Activated B cell treated with CpG ODN at 0.5 μM for 24 hours (primary cell): ENCODE measurements at regions of chr6 and their contacts with region 1.

Region 1: GRCh38 chr6:150692604-150693003 is 92.9 kb downstream of the PLEKHG1 start:
- DNase-seq: no peak
- ATAC-seq: no peak
- H3K4me3 Mint-ChIP-seq: no peak overlapping the region
- H3K27ac Mint-ChIP-seq: peak overlapping the region; percentile 71
- H3K4me1 Mint-ChIP-seq: peaks cover 94% of the 10 kb centered on the region
- H3K27me3 Mint-ChIP-seq: no peaks in the 10 kb centered on the region
- CTCF ChIP-seq: no peak

Region 2: GRCh38 chr6:150417899-150418826 is 274.4 kb before region 1 on chr6:
- CTCF ChIA-PET with region 1: interaction called, 5 read pairs
- POLR2A ChIA-PET with region 1: interaction called, 3 read pairs
- intact Hi-C with region 1: loop called (anchors 2 kb)
- DNase-seq: no peak
- ATAC-seq: peak; percentile 90
- H3K4me3 Mint-ChIP-seq: peak overlapping the region; percentile 82
- H3K27ac Mint-ChIP-seq: peak overlapping the region; percentile 77
- H3K4me1 Mint-ChIP-seq: peaks cover 14% of the 10 kb centered on the region
- H3K27me3 Mint-ChIP-seq: peaks cover 16% of the 10 kb centered on the region
- CTCF ChIP-seq: peak; percentile 58

Region 3: GRCh38 chr6:150547502-150548222 is 144.9 kb before region 1 on chr6:
- CTCF ChIA-PET with region 1: no interaction called
- POLR2A ChIA-PET with region 1: no interaction called
- intact Hi-C with region 1: no loop called
- DNase-seq: no peak
- ATAC-seq: no peak
- H3K4me3 Mint-ChIP-seq: no peak overlapping the region
- H3K27ac Mint-ChIP-seq: no peak overlapping the region
- H3K4me1 Mint-ChIP-seq: no peaks in the 10 kb centered on the region
- H3K27me3 Mint-ChIP-seq: peaks cover 16% of the 10 kb centered on the region
- CTCF ChIP-seq: no peak

Region 4: GRCh38 chr6:150641398-150642139 is 51.0 kb before region 1 on chr6:
- CTCF ChIA-PET with region 1: no interaction called
- POLR2A ChIA-PET with region 1: interaction called, 7 read pairs
- intact Hi-C with region 1: loop called (anchors 2 kb)
- DNase-seq: no peak
- ATAC-seq: peak; percentile 49
- H3K4me3 Mint-ChIP-seq: peak overlapping the region; percentile 77
- H3K27ac Mint-ChIP-seq: peak overlapping the region; percentile 91
- H3K4me1 Mint-ChIP-seq: peaks cover 90% of the 10 kb centered on the region
- H3K27me3 Mint-ChIP-seq: no peaks in the 10 kb centered on the region
- CTCF ChIP-seq: no peak

Region 5: DNA sequence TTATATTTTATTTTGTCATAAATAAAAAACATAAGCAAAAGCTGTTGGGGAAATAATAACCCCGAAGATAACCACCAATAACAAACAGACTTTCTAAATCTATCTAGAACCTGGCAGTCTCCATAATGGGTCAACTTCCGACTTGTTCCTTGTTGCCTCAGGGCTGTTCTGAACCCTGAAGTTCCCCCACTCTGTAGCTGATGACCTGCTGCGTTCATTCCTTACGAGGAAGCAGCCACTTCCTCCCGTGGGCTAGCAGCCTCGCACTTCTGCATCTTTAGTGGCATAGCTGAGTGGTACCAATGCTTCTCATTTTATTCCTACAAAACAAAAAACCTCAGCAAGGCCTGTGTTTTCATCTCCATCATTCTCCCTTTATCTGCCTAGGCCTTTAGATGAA is 10.1 kb after region 1 on chr6:
- CTCF ChIA-PET with region 1: interaction called, 3 read pairs
- POLR2A ChIA-PET with region 1: interaction called, 8 read pairs
- intact Hi-C with region 1: loop called (anchors 1 kb)
- DNase-seq: no peak
- ATAC-seq: peak; percentile 74
- H3K4me3 Mint-ChIP-seq: peak overlapping the region; percentile 11
- H3K27ac Mint-ChIP-seq: peak overlapping the region; percentile 86
- H3K4me1 Mint-ChIP-seq: peaks cover 91% of the 10 kb centered on the region
- H3K27me3 Mint-ChIP-seq: no peaks in the 10 kb centered on the region
- CTCF ChIP-seq: no peak

Region 6: GRCh38 chr6:150720774-150721233 is 28.2 kb after region 1 on chr6:
- CTCF ChIA-PET with region 1: interaction called, 3 read pairs
- POLR2A ChIA-PET with region 1: interaction called, 4 read pairs
- intact Hi-C with region 1: loop called (anchors 1 kb)
- DNase-seq: no peak
- ATAC-seq: peak; percentile 96
- H3K4me3 Mint-ChIP-seq: peak overlapping the region; percentile 25
- H3K27ac Mint-ChIP-seq: peak overlapping the region; percentile 80
- H3K4me1 Mint-ChIP-seq: peaks cover 74% of the 10 kb centered on the region
- H3K27me3 Mint-ChIP-seq: no peaks in the 10 kb centered on the region
- CTCF ChIP-seq: no peak

Region 7: DNA sequence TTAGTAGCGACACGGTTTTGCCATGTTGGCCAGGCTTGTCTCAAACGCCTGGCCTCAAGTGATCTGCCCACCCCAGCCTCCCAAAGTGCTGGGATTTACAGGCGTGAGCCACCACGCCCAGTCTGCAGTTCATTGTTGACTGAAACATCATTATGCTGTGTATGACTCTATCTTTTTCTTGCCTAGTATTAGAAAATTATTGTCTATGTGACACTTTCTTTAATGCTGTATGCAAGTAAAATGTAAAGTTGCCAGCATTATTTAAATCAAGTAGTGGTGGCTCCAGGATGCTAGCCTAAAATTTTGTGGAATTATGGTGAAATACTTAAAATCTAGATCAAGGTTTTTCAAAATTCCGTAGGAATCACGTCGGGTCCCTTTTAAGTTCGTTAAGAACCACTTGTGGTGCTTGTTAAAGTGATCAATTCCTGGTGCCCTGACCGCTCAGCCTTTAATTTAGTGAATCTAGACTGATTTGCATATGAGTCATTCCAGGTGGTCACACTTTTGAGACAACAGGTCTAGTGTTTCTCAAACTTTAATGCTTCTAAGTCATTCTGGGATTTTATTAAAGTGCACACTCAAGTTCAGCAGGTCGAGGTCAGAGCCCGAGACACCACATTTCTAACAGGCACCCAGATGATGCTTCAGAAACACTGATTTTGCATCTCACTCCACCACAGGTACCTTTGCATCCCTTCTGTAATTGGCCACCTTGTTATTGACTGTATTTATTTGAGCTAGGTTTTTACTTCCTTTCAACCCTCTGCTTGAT is 40.3 kb after region 1 on chr6:
- CTCF ChIA-PET with region 1: no interaction called
- POLR2A ChIA-PET with region 1: interaction called, 3 read pairs
- intact Hi-C with region 1: loop called (anchors 2 kb)
- DNase-seq: no peak
- ATAC-seq: peak; percentile 71
- H3K4me3 Mint-ChIP-seq: no peak overlapping the region
- H3K27ac Mint-ChIP-seq: peak overlapping the region; percentile 70
- H3K4me1 Mint-ChIP-seq: peaks cover 49% of the 10 kb centered on the region
- H3K27me3 Mint-ChIP-seq: no peaks in the 10 kb centered on the region
- CTCF ChIP-seq: no peak